ENCODE measurements at regions of chr16 and their contacts with region 1.

Region 1: DNA sequence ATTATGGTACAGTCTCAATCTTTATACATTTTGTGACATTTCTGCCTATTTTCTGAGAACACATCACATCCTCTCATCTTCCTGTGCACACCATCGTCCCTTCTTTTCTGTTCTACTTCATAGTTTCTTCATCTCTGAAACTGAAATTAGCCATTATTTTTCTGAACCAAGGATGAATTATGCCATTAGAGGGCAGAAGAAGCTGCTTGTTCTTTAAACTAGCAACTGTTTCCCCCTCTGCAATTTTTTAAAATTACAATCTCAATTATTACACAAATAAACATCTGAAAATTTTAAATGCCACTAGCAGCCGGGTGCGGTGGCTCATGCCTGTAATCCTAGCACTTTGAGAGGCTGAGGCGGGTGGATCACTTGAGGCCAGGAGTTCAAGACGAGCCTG is 41.3 kb downstream of the RBBP6 start:
- DNase-seq: peak; percentile 8
- H3K4me3 ChIP-seq: no peak overlapping the region
- CTCF ChIP-seq: peak; percentile 40

Region 2: DNA sequence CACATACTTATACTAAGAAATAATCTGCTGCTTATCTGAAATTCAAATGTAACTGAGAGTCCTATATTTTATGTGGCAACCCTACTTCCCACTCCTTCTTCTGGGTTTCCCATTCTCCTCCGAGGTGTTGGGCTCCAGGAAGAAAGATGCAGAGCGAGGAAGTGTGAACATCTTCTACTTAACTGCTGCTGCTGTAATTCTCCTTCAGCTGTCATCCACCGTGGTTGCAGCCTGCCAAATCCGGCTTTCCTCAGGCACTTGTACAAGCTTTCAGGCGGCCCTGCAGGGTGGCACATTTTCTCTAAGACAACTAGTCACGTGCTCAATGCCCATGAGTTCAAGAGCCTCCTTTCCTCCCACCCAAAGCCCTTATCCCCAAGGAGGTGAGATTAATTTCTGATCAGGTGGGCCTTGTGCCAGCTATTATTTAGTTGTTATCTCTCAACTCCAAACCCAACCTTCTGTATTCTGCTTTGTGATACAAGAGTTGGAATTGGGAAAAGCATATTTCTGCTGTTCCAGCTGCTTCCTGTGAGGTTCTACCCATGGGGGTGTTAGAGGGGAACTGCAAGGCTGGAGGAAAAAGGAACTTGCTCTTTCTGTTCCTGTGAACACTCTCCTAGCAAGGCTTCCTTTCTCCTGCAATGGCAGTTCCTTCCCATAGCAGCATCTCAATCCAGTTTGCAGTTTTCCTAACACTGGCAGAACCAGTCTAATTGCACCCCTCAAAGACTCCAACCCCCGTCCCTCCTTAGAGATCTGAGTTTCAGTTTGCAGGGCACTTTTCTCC is 108.9 kb before region 1 on chr16:
- in situ Hi-C with region 1: no loop called
- DNase-seq: no peak
- H3K4me3 ChIP-seq: no peak overlapping the region
- CTCF ChIP-seq: no peak

Region 3: GRCh38 chr16:24634919-24635318 is 54.3 kb after region 1 on chr16:
- in situ Hi-C with region 1: loop called (anchors 5 kb)
- DNase-seq: no peak
- H3K4me3 ChIP-seq: no peak overlapping the region
- CTCF ChIP-seq: no peak